Right ventricle myocardium inferior (tissue), 1 donor: ENCODE measurements at regions of chr16 and their contacts with region 1.

Region 1: GRCh38 chr16:1863681-1864460 is 8.1 kb downstream of the MEIOB start:
- DNase-seq: no peak
- ATAC-seq: no peak

Region 2: DNA sequence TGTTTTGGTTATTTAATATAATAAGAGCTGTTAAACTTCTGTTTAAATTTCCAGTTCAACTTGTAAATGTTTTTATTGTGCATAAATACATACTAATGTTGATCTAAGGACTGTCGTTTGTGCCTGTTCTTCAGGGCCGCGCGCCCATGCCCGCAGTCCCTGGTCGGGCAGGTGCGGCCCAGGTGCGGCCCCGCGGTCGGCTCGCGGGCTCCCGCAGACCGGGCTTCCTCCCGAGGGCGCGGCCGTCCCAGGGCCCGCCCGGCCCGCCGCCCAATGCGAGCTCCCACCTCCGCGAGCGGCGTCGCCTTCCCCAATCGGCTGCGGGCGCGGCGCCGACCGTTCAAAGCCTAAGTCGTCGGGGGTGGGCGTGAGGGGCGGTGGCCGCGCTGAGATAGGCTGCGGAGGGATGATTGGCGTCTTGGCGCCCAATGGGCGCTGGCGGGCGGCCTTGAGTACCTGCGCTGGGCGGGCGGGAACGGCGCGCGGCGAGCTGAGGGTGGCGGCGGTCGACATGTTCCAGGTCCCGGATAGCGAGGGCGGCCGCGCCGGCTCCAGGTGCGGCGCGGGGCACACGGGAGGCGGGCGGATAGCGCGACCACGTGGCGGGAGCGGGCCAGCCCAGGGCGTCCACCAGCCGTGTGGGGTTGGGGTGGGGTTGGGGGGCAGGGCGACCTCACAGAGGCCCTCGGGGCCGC is 185.9 kb before region 1 on chr16 and contains the start of gene JPT2:
- intact Hi-C with region 1: no loop called
- DNase-seq: peak; percentile 99
- ATAC-seq: peak; percentile 99
- total RNA-seq, gene JPT2: 41.5 TPM

Region 3: DNA sequence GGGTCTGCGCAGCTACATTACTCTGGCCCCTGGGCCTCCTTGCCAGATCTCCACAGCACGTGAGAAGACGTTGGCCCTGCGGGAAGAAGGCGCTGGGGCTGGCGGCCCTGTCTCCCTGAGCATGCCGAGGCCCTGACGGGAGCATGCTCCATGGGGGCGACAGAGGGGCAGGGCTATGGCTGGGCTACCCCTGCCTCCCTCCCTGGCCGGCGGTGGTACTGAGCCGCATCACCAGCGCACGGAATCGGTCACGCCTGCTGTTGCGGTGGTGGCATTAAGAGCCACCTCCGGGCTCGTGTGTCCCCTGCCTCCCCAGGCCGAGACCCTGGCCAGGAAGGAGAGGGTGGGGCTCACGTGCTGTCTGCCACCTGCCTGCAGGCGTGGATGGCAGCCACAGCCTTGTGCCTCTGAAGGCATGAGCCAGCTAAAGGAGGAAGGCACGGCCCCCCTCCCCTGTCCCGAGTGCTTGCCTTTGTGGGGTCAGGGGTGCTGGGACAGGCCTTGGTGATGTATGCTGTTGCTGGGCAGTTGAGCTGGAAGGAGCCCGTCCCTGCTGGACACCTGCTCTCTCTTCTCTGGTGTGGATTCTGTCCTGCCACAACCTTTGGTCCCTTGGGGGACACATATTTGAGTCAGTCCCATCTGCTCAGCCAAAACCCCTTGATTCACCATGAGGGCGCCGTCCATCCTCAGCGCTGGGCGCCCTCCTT is 129.6 kb before region 1 on chr16:
- intact Hi-C with region 1: no loop called
- DNase-seq: no peak
- ATAC-seq: peak; percentile 30

Region 4: DNA sequence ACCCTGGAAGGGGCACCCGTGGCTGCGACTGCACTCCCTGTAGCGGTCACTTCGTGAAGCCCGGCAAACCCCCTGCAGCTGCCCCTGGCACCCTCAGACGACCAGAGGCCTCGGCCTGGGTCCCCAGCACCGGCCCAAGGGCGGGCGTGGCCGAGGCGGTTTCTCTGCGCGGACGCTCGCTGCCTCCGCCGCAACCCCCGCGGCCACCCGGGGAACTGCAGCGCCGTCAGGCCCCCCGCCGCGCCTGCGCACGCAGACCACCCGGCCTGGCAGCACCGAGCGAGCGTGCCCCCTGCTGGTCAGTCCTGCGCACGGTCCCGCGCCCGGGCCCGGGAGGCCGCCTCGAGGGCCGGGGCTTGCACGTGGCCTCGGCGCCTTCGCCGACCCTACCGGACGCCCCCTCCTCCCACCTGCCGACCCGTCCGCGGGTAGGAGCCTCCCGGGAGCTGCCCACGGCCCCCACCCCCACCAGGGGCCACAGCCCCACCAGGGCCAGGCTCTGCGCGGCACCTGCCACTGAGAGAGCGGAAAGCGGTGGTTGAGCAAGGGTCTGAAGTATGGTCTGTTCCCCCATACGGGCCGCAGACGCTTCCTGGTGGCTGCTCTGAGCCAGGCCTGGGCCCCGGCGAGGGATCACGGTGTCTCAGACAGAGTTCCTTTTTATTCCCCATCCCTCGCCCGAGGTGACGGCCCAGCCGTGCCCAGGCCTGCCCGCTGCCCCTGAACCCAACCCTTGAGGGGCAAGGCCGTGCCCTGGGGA is 65.9 kb after region 1 on chr16:
- intact Hi-C with region 1: loop called (anchors 1 kb)
- DNase-seq: peak; percentile 95
- ATAC-seq: peak; percentile 95

Region 5: DNA sequence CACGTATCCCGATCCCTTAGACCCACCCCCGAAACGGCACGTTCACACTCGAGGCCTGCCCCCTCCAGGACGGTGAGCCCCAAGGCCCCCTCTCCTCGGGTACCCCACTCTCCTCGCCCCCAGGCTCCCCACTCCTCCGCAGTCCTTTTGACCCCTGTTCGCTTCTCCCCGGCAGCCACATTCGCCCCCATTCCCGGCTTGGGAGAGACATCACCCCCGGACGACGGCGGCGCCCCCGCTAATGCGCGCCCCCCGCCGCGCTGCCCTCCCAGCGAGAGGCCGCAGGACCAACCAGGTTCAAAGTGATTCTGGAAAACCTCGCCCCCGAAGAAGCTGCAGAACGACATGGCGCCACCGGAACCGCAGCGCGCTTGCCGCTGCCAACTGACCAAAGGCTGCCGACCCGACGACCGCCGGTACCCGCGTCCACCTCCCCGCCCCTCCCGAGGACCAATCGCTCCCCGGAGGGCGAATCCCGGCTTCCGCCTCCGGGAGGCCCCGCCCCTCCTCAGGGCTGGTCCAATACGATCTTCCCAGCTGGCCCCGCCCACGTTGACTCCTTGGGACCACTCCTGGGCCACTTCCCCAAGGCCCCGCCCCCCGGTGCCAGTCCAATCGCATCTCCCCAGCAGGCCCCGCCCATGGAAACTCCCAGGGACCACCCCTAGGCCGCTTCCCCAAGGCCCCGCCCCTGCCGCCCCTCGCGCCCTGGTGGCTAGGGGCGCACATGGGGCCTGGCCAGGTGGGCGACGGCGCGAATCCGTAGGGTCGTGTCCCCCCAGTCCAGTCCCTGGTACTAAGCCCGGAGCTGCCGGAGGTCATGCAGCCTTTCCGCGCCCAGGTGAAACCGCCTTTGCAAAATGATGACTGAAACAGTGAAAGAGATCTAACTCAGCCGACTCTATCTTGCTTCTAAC is 79.2 kb after region 1 on chr16 and contains the start of gene MSRB1:
- intact Hi-C with region 1: no loop called
- DNase-seq: peak; percentile 100
- ATAC-seq: peak; percentile 96
- total RNA-seq, gene MSRB1: 25.3 TPM

Region 6: GRCh38 chr16:2142942-2143877 is 279.3 kb after region 1 on chr16:
- intact Hi-C with region 1: loop called (anchors 5 kb)
- DNase-seq: peak; percentile 60
- ATAC-seq: no peak